GM13976 (cell line): ENCODE measurements at regions of chr1 and their contacts with region 1.

Region 1: DNA sequence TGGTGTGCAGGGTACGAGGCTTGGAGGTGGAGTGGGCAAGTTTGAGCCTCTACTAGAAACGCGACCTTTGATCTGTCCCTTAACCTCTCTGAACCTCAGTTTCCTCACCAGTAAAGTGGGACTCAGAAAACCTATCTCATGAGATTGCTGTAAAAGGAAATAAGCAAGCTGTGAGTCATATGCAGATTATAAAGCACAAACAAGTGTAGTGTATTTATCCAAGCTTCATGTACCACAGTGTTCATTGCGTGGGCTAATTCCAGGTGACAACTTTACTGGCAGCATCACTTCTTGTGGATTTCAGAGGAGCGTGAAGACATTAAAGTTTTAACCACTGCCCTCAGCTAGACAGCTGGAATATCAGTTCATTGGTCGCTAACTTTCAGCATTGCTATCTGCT is 44.4 kb downstream of the ZNF697 start:
- DNase-seq: no peak
- CTCF ChIP-seq: no peak

Region 2: DNA sequence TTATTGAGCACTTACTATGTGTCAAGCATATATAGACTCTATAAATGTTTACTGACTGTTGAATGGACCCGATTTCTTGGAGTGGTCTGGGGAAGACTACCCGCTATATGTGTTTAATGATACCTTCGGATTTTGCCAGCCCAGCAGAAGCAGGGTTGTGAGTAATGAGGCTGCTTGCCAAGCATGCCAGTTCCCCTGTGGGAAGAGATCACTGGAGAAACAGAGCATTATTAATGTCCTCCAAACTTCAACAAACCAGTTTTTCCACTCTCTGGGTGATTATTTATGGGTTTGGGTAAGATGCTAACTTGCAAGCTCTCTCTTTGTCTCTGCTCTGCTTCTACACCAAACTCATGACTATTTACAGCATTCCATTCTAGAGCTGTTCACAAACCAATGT is 83.0 kb after region 1 on chr1:
- in situ Hi-C with region 1: loop called (anchors 5 kb)
- DNase-seq: no peak
- CTCF ChIP-seq: no peak